Activated CD4-positive, alpha-beta T cell treated with anti-CD3 and anti-CD28 coated beads, Interleukin-2, amount 10 ng/mL, durations not matched to agents 24 days and 14 days (primary cell): ENCODE measurements at regions of chr3 and their contacts with region 1.

Region 1: DNA sequence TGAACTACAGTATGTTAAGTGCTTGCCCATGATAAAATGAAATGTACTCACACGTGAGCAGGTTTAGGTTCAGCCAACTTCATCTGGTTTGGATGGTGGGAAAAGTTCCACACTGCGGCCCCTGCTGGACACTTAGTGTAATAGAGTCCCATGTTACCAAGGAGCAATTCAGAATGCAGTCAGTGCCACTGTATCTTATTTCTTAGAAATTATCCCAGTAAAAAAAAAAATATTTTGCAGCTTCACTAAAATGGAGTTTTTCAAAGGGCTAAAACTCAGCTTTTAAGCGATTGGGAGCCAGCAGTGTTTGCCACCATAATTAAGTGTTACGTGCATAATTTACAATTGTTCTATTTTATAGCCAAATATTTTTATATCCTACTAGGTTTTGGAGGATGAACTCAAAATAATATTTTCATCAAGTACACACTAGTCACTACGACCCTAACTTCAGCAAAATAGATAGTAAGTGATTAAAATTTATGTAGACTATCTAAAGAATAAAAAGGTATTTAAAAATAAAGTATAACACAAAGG is 371.7 kb upstream of the GBE1 start:
- DNase-seq: peak; percentile 74
- H3K4me3 Mint-ChIP-seq: no peak overlapping the region
- H3K27ac Mint-ChIP-seq: no peak overlapping the region
- H3K4me1 Mint-ChIP-seq: no peaks in the 10 kb centered on the region
- H3K27me3 Mint-ChIP-seq: no peaks in the 10 kb centered on the region

Region 2: GRCh38 chr3:81490541-81491288 is 642.4 kb before region 1 on chr3:
- intact Hi-C with region 1: loop called (anchors 2 kb)
- DNase-seq: peak; percentile 91
- H3K4me3 Mint-ChIP-seq: no peak overlapping the region
- H3K27ac Mint-ChIP-seq: no peak overlapping the region
- H3K4me1 Mint-ChIP-seq: peaks cover 2% of the 10 kb centered on the region
- H3K27me3 Mint-ChIP-seq: no peaks in the 10 kb centered on the region

Region 3: DNA sequence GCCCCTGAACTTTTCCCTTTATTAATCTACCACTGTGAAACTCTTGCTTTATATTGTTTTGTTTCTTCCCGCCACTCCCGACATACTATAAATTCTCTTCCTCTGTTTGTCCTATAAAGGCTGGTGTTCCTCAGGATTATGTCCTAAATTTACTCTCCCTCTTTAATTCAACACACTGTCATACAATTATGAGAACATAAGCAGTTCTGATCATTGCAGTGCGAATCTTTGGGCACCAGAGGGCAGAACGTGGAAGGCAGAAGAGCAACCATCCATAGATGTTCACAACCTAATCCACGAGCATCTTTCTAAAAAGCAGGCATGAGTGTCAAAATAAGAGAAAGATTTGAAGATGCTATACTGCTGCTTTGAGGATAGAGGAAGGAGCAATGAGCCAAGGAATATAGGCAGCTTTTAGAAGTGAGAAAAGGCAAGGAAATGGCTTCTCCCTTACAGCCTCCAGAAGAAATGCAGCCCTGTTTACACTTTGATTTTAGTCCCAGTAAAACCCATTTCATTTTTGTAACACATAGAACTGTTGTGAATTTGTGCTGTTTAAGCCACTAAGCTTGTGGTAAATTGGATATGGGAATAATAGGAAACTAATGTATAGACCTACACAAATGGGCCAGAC is 551.1 kb before region 1 on chr3:
- intact Hi-C with region 1: loop called (anchors 10 kb)
- DNase-seq: peak; percentile 74
- H3K4me3 Mint-ChIP-seq: no peak overlapping the region
- H3K27ac Mint-ChIP-seq: no peak overlapping the region
- H3K4me1 Mint-ChIP-seq: no peaks in the 10 kb centered on the region
- H3K27me3 Mint-ChIP-seq: no peaks in the 10 kb centered on the region

Region 4: GRCh38 chr3:81666493-81667121 is 466.5 kb before region 1 on chr3:
- intact Hi-C with region 1: loop called (anchors 5 kb)
- DNase-seq: no peak
- H3K4me3 Mint-ChIP-seq: no peak overlapping the region
- H3K27ac Mint-ChIP-seq: no peak overlapping the region
- H3K4me1 Mint-ChIP-seq: peaks cover 8% of the 10 kb centered on the region
- H3K27me3 Mint-ChIP-seq: no peaks in the 10 kb centered on the region